ENCODE measurements at regions of chr13 and their contacts with region 1.

Region 1: GRCh38 chr13:91348906-91349435 is 1.5 kb downstream of the MIR17HG start:
- DNase-seq: peak; percentile 82 to 96 (median 92)
- ATAC-seq: peak; percentile 66
- H3K4me3 ChIP-seq: peak overlapping the region; percentile 57 to 82
- H3K4me3 Mint-ChIP-seq: peak overlapping the region; percentile 85
- H3K27ac ChIP-seq: peak overlapping the region in 1 of 2 experiments; percentile 77
- H3K27ac Mint-ChIP-seq: peak overlapping the region; percentile 74
- H3K4me1 ChIP-seq: peaks cover 27% of the 10 kb centered on the region
- H3K4me1 Mint-ChIP-seq: peaks cover 47% of the 10 kb centered on the region
- H3K27me3 ChIP-seq: no peaks in the 10 kb centered on the region
- H3K27me3 Mint-ChIP-seq: no peaks in the 10 kb centered on the region
- CTCF ChIP-seq: peak; percentile 85

Region 2: GRCh38 chr13:91196958-91197357 is 152.0 kb before region 1 on chr13:
- CTCF ChIA-PET with region 1: no interaction called
- POLR2A ChIA-PET with region 1: no interaction called
- intact Hi-C with region 1: no loop called
- DNase-seq: no peak
- ATAC-seq: no peak
- H3K4me3 ChIP-seq: no peak overlapping the region
- H3K4me3 Mint-ChIP-seq: no peak overlapping the region
- H3K27ac ChIP-seq: no peak overlapping the region
- H3K27ac Mint-ChIP-seq: no peak overlapping the region
- H3K4me1 ChIP-seq: no peaks in the 10 kb centered on the region
- H3K4me1 Mint-ChIP-seq: no peaks in the 10 kb centered on the region
- H3K27me3 ChIP-seq: no peaks in the 10 kb centered on the region
- H3K27me3 Mint-ChIP-seq: peaks cover 3% of the 10 kb centered on the region
- CTCF ChIP-seq: no peak

Region 3: GRCh38 chr13:91398413-91399272 is 49.7 kb after region 1 on chr13 and contains the start of gene GPC5:
- CTCF ChIA-PET with region 1: no interaction called
- POLR2A ChIA-PET with region 1: no interaction called
- intact Hi-C with region 1: loop called (anchors 1 to 2 kb)
- DNase-seq: peak; percentile 61 to 89 (median 78)
- ATAC-seq: peak; percentile 100
- H3K4me3 ChIP-seq: peak within 1 kb of the TSS; percentile 45 to 51
- H3K4me3 Mint-ChIP-seq: peak within 1 kb of the TSS; percentile 83
- H3K27ac ChIP-seq: no peak within 1 kb of the TSS
- H3K27ac Mint-ChIP-seq: no peak within 1 kb of the TSS
- H3K4me1 ChIP-seq: peaks cover 19% of the 10 kb centered on the region
- H3K4me1 Mint-ChIP-seq: peaks cover 14% of the 10 kb centered on the region
- H3K27me3 ChIP-seq: peaks cover 12 to 15% of the 10 kb centered on the region in 2 experiments
- H3K27me3 Mint-ChIP-seq: peaks cover 39% of the 10 kb centered on the region
- CTCF ChIP-seq: no peak
- total RNA-seq, gene GPC5: 0.14 TPM in 1 of 2 experiments, not detected in the other

Measured in CD8-positive, alpha-beta T cell (primary cell).